HCT116 (cell line): ENCODE measurements at regions of chr19 and their contacts with region 1.

Region 1: GRCh38 chr19:42165146-42165545 is 32.9 kb upstream of the POU2F2 start:
- DNase-seq: no peak
- ATAC-seq: no peak
- H3K4me3 ChIP-seq: no peak overlapping the region
- H3K27ac ChIP-seq: no peak overlapping the region
- H3K4me1 ChIP-seq: 0 out of 4 replicates have a peak, but pooled peaks cover 0 to 3% of the 10 kb centered on the region in 2 experiments
- H3K27me3 ChIP-seq: peaks cover 24% of the 10 kb centered on the region
- CTCF ChIP-seq: no peak
- POLR2A ChIP-seq: no peak
- RAD21 ChIP-seq: no peak

Region 2: GRCh38 chr19:42150364-42150763 is 14.8 kb before region 1 on chr19:
- CTCF ChIA-PET with region 1: no interaction called
- POLR2A ChIA-PET with region 1: interaction called, 11 read pairs
- RAD21 ChIA-PET with region 1: no interaction called
- intact Hi-C with region 1: no loop called
- DNase-seq: no peak
- ATAC-seq: no peak
- H3K4me3 ChIP-seq: no peak overlapping the region
- H3K27ac ChIP-seq: no peak overlapping the region
- H3K4me1 ChIP-seq: no peaks in the 10 kb centered on the region
- H3K27me3 ChIP-seq: peaks cover 38% of the 10 kb centered on the region
- CTCF ChIP-seq: no peak
- POLR2A ChIP-seq: no peak
- RAD21 ChIP-seq: no peak

Region 3: GRCh38 chr19:42176990-42177685 is 12.0 kb after region 1 on chr19:
- CTCF ChIA-PET with region 1: no interaction called
- POLR2A ChIA-PET with region 1: no interaction called
- RAD21 ChIA-PET with region 1: no interaction called
- intact Hi-C with region 1: no loop called
- DNase-seq: peak; percentile 18
- ATAC-seq: peak; percentile 97
- H3K4me3 ChIP-seq: 0 out of 4 replicates have a peak overlapping the region, but pooled peaks of 1 of the 2 experiments have one; percentile 11
- H3K27ac ChIP-seq: no peak overlapping the region
- H3K4me1 ChIP-seq: peaks cover 0 to 4% of the 10 kb centered on the region in 2 experiments; a peak in 2 of 4 replicates
- H3K27me3 ChIP-seq: peaks cover 55% of the 10 kb centered on the region
- CTCF ChIP-seq: peak in 2 of 3 experiments; percentile 16 to 27; a peak in 3 of 6 replicates
- POLR2A ChIP-seq: no peak
- RAD21 ChIP-seq: no peak

Region 4: DNA sequence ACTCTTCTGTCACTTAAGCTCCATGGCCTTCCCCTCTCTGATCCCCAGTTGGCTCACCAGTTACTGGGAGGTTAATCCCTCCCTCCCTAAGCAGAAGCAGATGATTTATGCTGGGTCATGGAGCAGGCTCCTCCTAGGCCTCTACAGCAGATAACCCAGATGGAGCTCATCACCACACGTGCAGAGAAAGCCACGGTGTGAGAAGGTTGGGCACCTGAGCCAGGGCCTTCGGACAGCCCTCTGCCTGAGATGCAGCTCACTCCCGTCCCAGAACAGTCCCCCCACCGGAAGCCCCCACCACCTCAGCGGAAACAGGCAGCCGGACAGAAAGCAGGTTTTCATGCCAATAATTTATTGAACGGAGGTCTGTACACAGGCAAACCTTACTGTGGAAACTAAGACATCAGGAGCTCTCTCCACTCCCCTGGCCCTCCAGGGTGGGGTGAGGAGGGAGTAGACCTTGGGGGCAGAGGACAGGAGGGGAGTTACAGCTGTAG is 64.8 kb after region 1 on chr19:
- CTCF ChIA-PET with region 1: no interaction called
- POLR2A ChIA-PET with region 1: no interaction called
- RAD21 ChIA-PET with region 1: no interaction called
- intact Hi-C with region 1: no loop called
- DNase-seq: no peak
- ATAC-seq: 0 out of 2 replicates have a peak, but pooled peaks have one; percentile 20
- H3K4me3 ChIP-seq: no peak overlapping the region
- H3K27ac ChIP-seq: 0 out of 2 replicates have a peak overlapping the region, but pooled peaks have one; percentile 13
- H3K4me1 ChIP-seq: no peaks in the 10 kb centered on the region
- H3K27me3 ChIP-seq: no peaks in the 10 kb centered on the region
- CTCF ChIP-seq: no peak
- POLR2A ChIP-seq: no peak
- RAD21 ChIP-seq: no peak